ENCODE measurements at regions of chr9 and their contacts with region 1.

Region 1: DNA sequence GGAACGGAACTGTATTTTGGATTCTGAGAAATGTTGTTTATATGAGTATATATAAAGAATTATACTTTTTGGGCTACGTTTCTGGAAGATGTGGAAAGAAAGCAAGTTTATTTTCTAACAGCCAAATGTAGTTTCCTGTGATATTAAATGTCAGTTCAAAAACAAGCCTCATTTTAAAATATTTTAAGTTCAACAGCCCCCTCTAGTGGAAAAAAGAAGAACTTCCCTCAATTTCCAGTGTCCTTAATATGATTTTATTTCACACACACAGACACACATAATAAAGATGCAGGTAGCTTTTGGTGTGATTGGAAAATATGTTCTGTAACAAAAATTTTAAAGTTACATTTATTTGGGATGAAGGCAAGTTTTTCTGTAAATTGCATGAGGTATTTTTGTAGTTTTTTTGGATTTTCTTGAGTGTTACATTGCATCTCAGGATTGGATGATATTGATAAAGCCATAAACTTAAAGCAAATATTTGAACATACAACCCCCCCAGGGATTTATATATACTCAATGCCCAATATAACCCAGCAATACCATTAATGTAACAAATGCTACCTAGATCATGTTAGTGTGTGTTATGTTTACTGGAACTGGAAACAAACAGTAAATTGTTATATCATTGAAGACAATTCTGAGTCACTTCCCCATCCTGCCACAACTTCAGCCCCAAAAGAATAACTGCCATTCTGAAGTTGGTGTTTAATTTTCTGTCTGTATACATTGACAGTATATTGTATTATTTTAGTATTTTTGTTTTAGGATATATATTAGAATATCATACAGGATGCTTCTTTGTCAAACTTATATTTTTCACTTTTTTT is 54.0 kb downstream of the CCDC171 start:
- DNase-seq: no peak
- ATAC-seq: peak; percentile 73
- H3K4me3 ChIP-seq: no peak overlapping the region
- H3K27ac ChIP-seq: no peak overlapping the region
- H3K4me1 ChIP-seq: no peaks in the 10 kb centered on the region
- H3K27me3 ChIP-seq: no peaks in the 10 kb centered on the region
- CTCF ChIP-seq: peak; percentile 46 to 68 (median 52)
- EP300 ChIP-seq: no peak
- POLR2A ChIP-seq: no peak
- RAD21 ChIP-seq: peak; percentile 70

Region 2: GRCh38 chr9:15211160-15211814 is 395.6 kb before region 1 on chr9:
- CTCF ChIA-PET with region 1: interaction called, 25 read pairs
- POLR2A ChIA-PET with region 1: interaction called, 3 read pairs
- RAD21 ChIA-PET with region 1: interaction called, 10 read pairs
- SMC1A ChIA-PET with region 1: interaction called, 16 read pairs
- in situ Hi-C with region 1: loop called (anchors 10 kb)
- intact Hi-C with region 1: loop called (anchors 2 kb)
- DNase-seq: peak; percentile 30
- ATAC-seq: peak; percentile 86
- H3K4me3 ChIP-seq: no peak overlapping the region
- H3K27ac ChIP-seq: no peak overlapping the region
- H3K4me1 ChIP-seq: no peaks in the 10 kb centered on the region
- H3K27me3 ChIP-seq: no peaks in the 10 kb centered on the region
- CTCF ChIP-seq: peak; percentile 81 to 87 (median 85); a peak in 5 of 6 replicates
- EP300 ChIP-seq: no peak
- POLR2A ChIP-seq: no peak
- RAD21 ChIP-seq: peak; percentile 86

Region 3: GRCh38 chr9:15277400-15278090 is 329.3 kb before region 1 on chr9:
- CTCF ChIA-PET with region 1: interaction called, 17 read pairs
- POLR2A ChIA-PET with region 1: no interaction called
- RAD21 ChIA-PET with region 1: interaction called, 3 read pairs
- SMC1A ChIA-PET with region 1: interaction called, 10 read pairs
- in situ Hi-C with region 1: no loop called
- intact Hi-C with region 1: loop called (anchors 5 kb)
- DNase-seq: no peak
- ATAC-seq: peak; percentile 73
- H3K4me3 ChIP-seq: no peak overlapping the region
- H3K27ac ChIP-seq: no peak overlapping the region
- H3K4me1 ChIP-seq: no peaks in the 10 kb centered on the region
- H3K27me3 ChIP-seq: no peaks in the 10 kb centered on the region
- CTCF ChIP-seq: peak; percentile 12 to 49 (median 27); a peak in 4 of 6 replicates
- EP300 ChIP-seq: no peak
- POLR2A ChIP-seq: no peak
- RAD21 ChIP-seq: peak; percentile 58

Region 4: GRCh38 chr9:15461601-15462000 is 145.3 kb before region 1 on chr9:
- CTCF ChIA-PET with region 1: no interaction called
- POLR2A ChIA-PET with region 1: no interaction called
- RAD21 ChIA-PET with region 1: no interaction called
- SMC1A ChIA-PET with region 1: no interaction called
- in situ Hi-C with region 1: no loop called
- intact Hi-C with region 1: loop called (anchors 5 kb)
- DNase-seq: no peak
- ATAC-seq: no peak
- H3K4me3 ChIP-seq: no peak overlapping the region
- H3K27ac ChIP-seq: no peak overlapping the region
- H3K4me1 ChIP-seq: no peaks in the 10 kb centered on the region
- H3K27me3 ChIP-seq: no peaks in the 10 kb centered on the region
- CTCF ChIP-seq: no peak
- EP300 ChIP-seq: no peak
- POLR2A ChIP-seq: no peak
- RAD21 ChIP-seq: no peak

Region 5: GRCh38 chr9:15552636-15553527 is 54.0 kb before region 1 on chr9 and contains the start of gene CCDC171:
- CTCF ChIA-PET with region 1: interaction called, 24 read pairs
- POLR2A ChIA-PET with region 1: interaction called, 3 read pairs
- RAD21 ChIA-PET with region 1: interaction called, 17 read pairs
- SMC1A ChIA-PET with region 1: interaction called, 12 read pairs
- in situ Hi-C with region 1: no loop called
- intact Hi-C with region 1: loop called (anchors 5 kb)
- DNase-seq: peak; percentile 75
- ATAC-seq: peak; percentile 88
- H3K4me3 ChIP-seq: peak within 1 kb of the TSS; percentile 95
- H3K27ac ChIP-seq: peak within 1 kb of the TSS; percentile 80
- H3K4me1 ChIP-seq: peaks cover 8% of the 10 kb centered on the region
- H3K27me3 ChIP-seq: no peaks in the 10 kb centered on the region
- CTCF ChIP-seq: no peak
- EP300 ChIP-seq: no peak; a peak in 1 of 4 replicates
- POLR2A ChIP-seq: peak; percentile 74
- RAD21 ChIP-seq: no peak
- polyA plus RNA-seq, gene CCDC171: 1.00 to 1.1 TPM